ENCODE measurements at regions of chr10 and their contacts with region 1.

Region 1: DNA sequence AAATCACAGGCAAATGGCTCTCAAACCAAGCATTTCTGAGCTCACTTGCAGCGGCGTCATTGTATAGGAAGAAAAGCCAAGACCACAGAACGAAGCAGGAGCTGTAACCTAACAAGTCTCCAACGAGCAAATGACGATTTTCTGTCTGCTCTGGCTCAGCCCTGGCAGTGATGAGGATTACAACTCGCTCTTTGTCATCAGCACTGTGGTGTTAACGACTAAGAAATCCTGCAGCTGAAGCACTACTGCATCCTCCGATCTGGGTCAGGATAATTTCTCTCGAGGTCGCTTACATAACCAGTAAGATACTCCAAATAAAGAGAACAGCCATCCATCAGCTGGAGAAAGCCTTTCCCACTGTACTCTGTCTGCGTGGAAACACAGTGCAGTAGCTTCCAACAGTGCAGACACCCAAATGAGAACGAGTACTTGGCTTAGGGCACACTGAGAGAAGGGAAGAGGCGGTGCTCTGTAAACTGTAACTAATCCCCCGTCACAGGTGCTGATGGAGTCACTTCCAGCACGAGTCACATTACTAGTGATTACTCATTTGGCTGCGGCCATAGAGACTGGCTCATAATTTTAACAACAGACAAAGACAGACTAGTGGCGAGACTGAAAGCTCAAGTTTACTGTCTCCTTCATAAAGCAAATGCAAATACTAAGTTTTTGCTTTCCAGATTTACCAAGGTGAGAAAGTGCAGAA is 135.8 kb downstream of the NRBF2 start:
- DNase-seq: peak in 4 of 5 donors; percentile 87 to 88 (median 88)
- ATAC-seq: peak; percentile 96 to 99 (median 98)
- H3K4me3 ChIP-seq: peak overlapping the region; percentile 30 to 68 (median 58)
- H3K27ac ChIP-seq: peak overlapping the region; percentile 84 to 96 (median 88)
- H3K4me1 ChIP-seq: peaks cover 4 to 38% (median 19%) of the 10 kb centered on the region in 12 donors
- H3K27me3 ChIP-seq: no peaks in the 10 kb centered on the region
- CTCF ChIP-seq: peak in 10 of 12 donors; percentile 13 to 49 (median 38)
- POLR2A ChIP-seq: peak in 1 of 2 donors; percentile 94

Region 2: DNA sequence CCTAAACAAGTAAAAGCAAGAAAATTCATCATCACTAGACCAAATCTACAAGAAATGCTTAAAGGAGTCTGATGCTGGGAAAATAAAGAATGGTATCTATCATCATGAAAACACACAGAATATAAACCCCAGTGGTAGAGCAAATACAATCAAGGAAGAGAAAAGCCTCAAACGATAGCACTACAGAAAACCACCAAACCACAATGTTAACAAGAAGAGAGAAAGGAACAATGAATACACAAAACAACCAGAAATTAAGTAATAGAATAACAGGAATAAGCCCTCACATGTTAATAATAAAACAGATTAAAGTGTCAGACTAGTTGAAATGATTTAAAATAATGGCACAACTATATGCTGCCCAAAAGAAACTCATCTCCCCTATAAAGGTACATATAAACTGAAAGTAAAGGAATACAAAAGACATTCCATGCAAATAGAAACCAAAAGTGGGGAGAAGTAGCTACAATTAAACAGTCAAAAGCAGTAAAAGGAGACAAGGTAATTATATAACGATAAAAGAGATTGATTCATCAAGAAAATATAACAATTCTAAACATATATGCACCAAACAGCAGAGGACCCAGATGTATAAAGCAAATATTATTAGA is 119.6 kb after region 1 on chr10:
- intact Hi-C with region 1: loop called in 1 of 10 experiments (anchors 10 kb)
- DNase-seq: no peak
- ATAC-seq: no peak
- H3K4me3 ChIP-seq: peak overlapping the region in 1 of 12 donors; percentile 29
- H3K27ac ChIP-seq: peak overlapping the region in 2 of 12 donors; percentile 11 to 19
- H3K4me1 ChIP-seq: peaks cover 0 to 34% (median 5%) of the 10 kb centered on the region in 12 donors
- H3K27me3 ChIP-seq: no peaks in the 10 kb centered on the region
- CTCF ChIP-seq: no peak
- POLR2A ChIP-seq: no peak

Region 3: DNA sequence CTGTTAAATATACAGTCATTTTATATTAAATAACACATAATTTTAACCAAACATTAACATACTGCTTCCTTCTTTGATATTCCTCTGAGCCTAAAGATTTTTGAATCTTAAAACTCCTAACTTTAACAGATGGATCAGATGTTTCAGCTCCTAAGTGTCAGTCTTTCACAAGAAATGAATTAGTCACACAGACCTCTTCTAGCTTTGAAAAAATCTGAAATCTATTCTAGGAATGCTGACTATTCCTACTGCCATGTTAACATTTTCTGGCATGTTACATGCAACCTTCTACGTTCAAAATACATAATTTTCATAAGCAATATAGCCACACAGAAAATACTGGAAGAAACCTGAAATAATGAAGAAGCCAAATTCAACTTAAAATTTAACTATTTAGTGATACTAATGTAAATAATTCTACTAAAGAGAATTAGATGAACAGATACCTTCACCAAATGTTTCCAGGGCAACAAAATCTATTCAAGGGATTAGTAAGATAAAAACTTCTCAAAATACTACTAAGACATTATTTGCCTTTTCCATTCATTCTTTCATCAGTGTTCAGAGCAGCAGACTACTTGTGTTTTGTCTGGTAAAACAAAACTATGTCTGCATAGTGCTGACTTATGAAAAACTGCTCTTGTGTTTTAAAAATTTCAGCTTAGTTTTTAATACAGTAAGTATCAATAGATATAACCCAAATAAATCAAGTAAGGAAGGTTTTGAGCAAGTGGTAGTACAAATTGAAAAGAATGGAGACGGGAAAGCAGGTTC is 187.7 kb after region 1 on chr10:
- intact Hi-C with region 1: loop called in 3 of 10 experiments (anchors 10 kb)
- DNase-seq: no peak
- ATAC-seq: peak in 1 of 4 donors; percentile 58
- H3K4me3 ChIP-seq: no peak overlapping the region
- H3K27ac ChIP-seq: no peak overlapping the region
- H3K4me1 ChIP-seq: peaks cover 0 to 34% (median 10%) of the 10 kb centered on the region in 12 donors
- H3K27me3 ChIP-seq: no peaks in the 10 kb centered on the region
- CTCF ChIP-seq: no peak
- POLR2A ChIP-seq: no peak

Region 4: DNA sequence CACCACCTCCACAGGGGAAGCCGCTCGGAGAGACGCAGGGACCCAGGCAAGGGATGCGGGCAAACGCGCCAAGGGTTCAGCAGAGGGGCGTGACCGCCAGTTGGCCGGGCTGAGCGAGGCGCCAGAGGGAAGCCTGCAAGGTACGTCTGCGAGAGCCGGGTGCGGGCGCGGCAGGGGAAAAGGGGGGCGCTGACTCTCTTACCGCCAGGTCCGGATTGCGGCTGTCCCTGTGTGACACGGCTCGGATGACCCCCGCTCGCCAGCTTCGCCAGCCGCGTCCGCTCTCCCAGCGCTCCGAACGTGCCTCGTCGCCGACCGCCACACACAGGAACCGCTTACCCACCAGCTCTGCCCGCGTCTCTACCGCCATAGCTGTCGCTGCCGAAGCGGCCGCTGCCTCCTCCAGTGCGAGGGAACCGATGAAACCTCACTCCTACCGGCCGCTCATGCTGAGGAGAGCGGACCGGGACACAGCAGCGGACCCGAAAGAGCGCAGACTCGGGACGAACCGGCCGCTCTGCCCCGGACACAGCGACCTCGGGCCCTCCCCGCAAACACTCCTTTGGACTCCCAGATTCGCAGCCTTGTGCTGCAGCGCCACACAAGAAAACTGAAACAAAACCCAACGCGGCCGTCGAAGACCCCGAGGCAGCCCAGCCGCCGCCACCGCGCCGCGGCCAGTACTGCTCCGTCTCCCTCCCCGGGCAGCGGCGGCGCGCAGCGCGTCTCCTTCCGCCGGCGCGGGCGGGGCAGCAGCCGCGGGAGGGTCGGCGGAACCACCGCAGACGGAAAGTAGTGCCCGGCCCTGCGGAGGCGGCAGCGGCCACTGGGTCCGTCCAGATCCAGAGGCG is 196.6 kb after region 1 on chr10 and contains the start of gene JMJD1C:
- intact Hi-C with region 1: loop called in 4 of 10 experiments (anchors 5 to 10 kb)
- DNase-seq: peak; percentile 84 to 91 (median 86)
- ATAC-seq: peak; percentile 69 to 94 (median 90)
- H3K4me3 ChIP-seq: peak within 1 kb of the TSS; percentile 65 to 93 (median 86)
- H3K27ac ChIP-seq: peak within 1 kb of the TSS; percentile 87 to 96 (median 92)
- H3K4me1 ChIP-seq: peaks cover 0 to 40% (median 18%) of the 10 kb centered on the region in 12 donors
- H3K27me3 ChIP-seq: no peaks in the 10 kb centered on the region
- CTCF ChIP-seq: peak in 2 of 12 donors; percentile 7 to 40
- POLR2A ChIP-seq: peak in 1 of 2 donors; percentile 60
- total RNA-seq, gene JMJD1C: 27.0 to 54.6 (median 42.7) TPM

Region 5: GRCh38 chr10:63521416-63522276 is 252.7 kb after region 1 on chr10:
- intact Hi-C with region 1: loop called in 4 of 10 experiments (anchors 5 to 10 kb)
- DNase-seq: peak; percentile 69 to 88 (median 76)
- ATAC-seq: peak; percentile 15 to 91 (median 82)
- H3K4me3 ChIP-seq: peak overlapping the region; percentile 63 to 91 (median 78)
- H3K27ac ChIP-seq: peak overlapping the region; percentile 97 to 99 (median 98)
- H3K4me1 ChIP-seq: peaks cover 4 to 64% (median 49%) of the 10 kb centered on the region in 12 donors
- H3K27me3 ChIP-seq: no peaks in the 10 kb centered on the region
- CTCF ChIP-seq: no peak
- POLR2A ChIP-seq: peak in 1 of 2 donors; percentile 35

Measured in heart left ventricle (tissue), 16 donors.